Gastrocnemius medialis (tissue), 4 donors: ENCODE measurements at regions of chr17 and their contacts with region 1.

Region 1: DNA sequence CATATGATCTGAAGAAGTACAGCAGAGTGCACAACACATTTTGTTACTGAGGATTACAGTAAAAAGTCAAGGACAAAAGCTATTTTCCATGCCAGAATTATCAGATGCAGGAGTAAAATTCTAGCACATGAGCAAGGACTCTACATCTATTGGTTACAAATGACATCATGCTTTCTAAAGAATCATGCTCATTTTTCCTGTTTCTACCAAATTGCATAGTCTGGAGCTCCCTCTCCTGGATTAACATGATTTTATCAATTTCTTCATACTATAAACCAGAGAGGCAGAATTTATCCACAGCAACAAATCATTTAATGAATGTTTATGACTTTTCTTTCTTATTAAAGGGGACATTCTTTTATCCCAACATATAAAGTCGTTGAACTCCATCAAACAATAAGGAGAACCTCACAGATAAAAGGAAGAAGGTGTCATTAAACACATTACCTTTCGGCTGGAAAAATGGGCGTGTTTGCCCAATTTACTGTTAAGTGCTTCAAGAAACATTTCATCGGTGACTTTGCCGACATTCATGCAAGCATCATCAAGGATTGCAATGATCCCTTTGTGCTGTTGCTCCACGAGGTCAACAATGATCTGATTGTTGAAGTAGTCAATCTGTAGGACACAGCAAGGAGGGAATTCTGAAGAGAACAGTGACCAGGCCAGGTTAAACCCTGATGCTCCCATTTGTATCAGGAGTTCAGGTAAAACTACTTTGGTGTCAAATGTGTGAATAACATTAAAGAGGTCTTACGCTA is 121.7 kb downstream of the MYO1D start:
- DNase-seq: no peak
- ATAC-seq: peak; percentile 49 to 66
- H3K4me3 ChIP-seq: no peak overlapping the region
- H3K27ac ChIP-seq: no peak overlapping the region
- H3K4me1 ChIP-seq: no peaks in the 10 kb centered on the region
- H3K27me3 ChIP-seq: no peaks in the 10 kb centered on the region
- CTCF ChIP-seq: peak; percentile 24 to 36 (median 30)
- POLR2A ChIP-seq: no peak

Region 2: GRCh38 chr17:32461853-32462617 is 293.2 kb before region 1 on chr17:
- in situ Hi-C with region 1: loop called in 3 of 4 experiments (anchors 10 to 25 kb)
- intact Hi-C with region 1: loop called (anchors 5 kb)
- DNase-seq: no peak
- ATAC-seq: peak in 1 of 2 donors; percentile 76
- H3K4me3 ChIP-seq: no peak overlapping the region
- H3K27ac ChIP-seq: peak overlapping the region in 1 of 4 donors; percentile 1
- H3K4me1 ChIP-seq: peaks cover 0 to 4% of the 10 kb centered on the region in 2 donors
- H3K27me3 ChIP-seq: no peaks in the 10 kb centered on the region
- CTCF ChIP-seq: peak in 4 of 5 experiments; percentile 26 to 56 (median 34)
- POLR2A ChIP-seq: no peak

Region 3: GRCh38 chr17:32486111-32486700 is 269.0 kb before region 1 on chr17:
- in situ Hi-C with region 1: no loop called
- intact Hi-C with region 1: loop called (anchors 5 kb)
- DNase-seq: peak; percentile 46 to 71
- ATAC-seq: peak; percentile 72 to 73
- H3K4me3 ChIP-seq: peak overlapping the region; percentile 48 to 75 (median 55)
- H3K27ac ChIP-seq: peak overlapping the region; percentile 79 to 93 (median 86)
- H3K4me1 ChIP-seq: peaks cover 12 to 26% of the 10 kb centered on the region in 2 donors
- H3K27me3 ChIP-seq: no peaks in the 10 kb centered on the region
- CTCF ChIP-seq: no peak
- POLR2A ChIP-seq: peak in 1 of 2 donors; percentile 59

Region 4: DNA sequence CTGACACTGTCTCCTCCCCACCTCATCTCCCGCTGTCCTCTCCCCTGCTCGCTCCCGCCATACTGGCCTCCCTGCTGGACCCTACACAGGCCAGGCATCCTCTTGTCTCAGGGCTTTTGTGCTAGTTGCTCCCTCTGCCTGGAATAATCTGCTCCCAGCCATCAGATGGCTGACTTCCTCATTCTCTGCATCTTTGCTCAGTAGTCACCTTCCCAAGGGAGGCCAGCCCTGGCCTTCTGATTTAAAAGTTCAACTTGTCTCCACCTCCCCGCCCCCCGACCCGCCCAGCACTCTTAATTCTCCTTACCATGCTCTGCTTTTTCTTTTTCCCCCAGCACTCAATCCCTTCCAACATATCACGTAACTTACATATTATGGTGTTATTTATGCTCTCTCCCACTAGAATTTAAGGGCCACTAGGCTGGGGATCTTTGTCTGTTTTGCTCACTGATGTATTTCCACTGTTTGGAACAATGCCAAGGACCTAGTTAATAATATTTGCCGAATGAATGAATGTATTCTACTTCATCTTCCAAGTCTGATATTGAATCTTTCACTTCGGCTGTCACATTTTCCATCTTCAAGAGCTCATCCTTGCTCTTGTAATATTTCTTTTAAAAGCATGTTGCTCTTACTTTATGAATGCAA is 90.2 kb before region 1 on chr17:
- in situ Hi-C with region 1: loop called in 1 of 4 experiments (anchors 10 kb)
- intact Hi-C with region 1: no loop called
- DNase-seq: no peak
- ATAC-seq: no peak
- H3K4me3 ChIP-seq: no peak overlapping the region
- H3K27ac ChIP-seq: no peak overlapping the region
- H3K4me1 ChIP-seq: no peaks in the 10 kb centered on the region
- H3K27me3 ChIP-seq: no peaks in the 10 kb centered on the region
- CTCF ChIP-seq: no peak
- POLR2A ChIP-seq: no peak

Region 5: GRCh38 chr17:32777436-32777835 is 22.2 kb after region 1 on chr17:
- in situ Hi-C with region 1: no loop called
- intact Hi-C with region 1: no loop called
- DNase-seq: no peak
- ATAC-seq: no peak
- H3K4me3 ChIP-seq: no peak overlapping the region
- H3K27ac ChIP-seq: no peak overlapping the region
- H3K4me1 ChIP-seq: no peaks in the 10 kb centered on the region
- H3K27me3 ChIP-seq: no peaks in the 10 kb centered on the region
- CTCF ChIP-seq: no peak
- POLR2A ChIP-seq: no peak